Activated CD4-positive, alpha-beta memory T cell treated with anti-CD3 and anti-CD28 coated beads, Interleukin-2, amount 10 ng/mL, durations not matched to agents 7 days and 5 days (primary cell): ENCODE measurements at regions of chr12 and their contacts with region 1.

Region 1: GRCh38 chr12:131928711-131929580 is at the start of gene PUS1:
- DNase-seq: peak; percentile 95
- H3K4me3 Mint-ChIP-seq: peak within 1 kb of the TSS; percentile 99
- H3K27ac Mint-ChIP-seq: peak within 1 kb of the TSS; percentile 91
- H3K4me1 Mint-ChIP-seq: peaks cover 31% of the 10 kb centered on the region
- H3K27me3 Mint-ChIP-seq: no peaks in the 10 kb centered on the region
- total RNA-seq, gene PUS1: 32.9 to 34.7 TPM

Region 2: DNA sequence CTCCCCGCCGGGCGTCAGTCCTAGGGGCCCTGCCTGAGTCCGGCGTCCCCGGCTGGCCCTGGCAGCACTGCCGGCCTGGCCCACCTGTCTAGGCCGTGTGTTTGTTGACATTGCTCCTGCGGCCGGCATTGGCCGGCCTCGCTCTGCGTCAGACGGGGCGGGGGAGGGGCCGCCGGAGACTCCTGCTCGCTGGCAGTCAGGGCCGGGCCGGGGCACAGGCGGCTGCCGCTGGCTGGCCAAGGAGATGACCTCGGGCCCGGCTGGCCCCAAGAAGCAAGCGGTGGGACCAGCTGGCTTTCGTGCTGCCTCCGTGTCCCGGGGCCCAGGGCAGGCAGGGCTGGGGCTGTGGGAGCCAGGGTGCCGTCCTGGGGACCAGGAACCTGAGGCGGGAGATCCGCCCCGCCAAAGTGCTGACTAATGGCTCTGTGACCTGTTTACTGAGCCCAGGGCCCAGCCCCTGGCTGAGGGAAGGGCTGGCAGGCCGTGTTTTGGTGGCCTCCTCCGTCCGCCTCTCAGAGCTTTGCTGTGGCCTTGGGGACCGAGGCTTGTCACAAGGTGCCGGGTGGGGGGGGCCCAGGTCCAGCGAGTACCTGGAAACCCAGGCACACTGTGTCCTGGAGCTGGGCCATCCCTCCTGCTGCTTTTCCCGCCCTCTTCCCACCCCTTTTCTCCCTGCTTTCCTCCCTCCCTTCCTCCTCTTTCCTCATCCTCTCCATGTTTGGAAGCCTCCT is 32.7 kb before region 1 on chr12:
- CTCF ChIA-PET with region 1: no interaction called
- POLR2A ChIA-PET with region 1: interaction called, 31 read pairs
- DNase-seq: peak; percentile 77
- H3K4me3 Mint-ChIP-seq: peak overlapping the region; percentile 86
- H3K27ac Mint-ChIP-seq: no peak overlapping the region
- H3K4me1 Mint-ChIP-seq: peaks cover 26% of the 10 kb centered on the region
- H3K27me3 Mint-ChIP-seq: no peaks in the 10 kb centered on the region

Region 3: GRCh38 chr12:131949431-131950181 is 20.7 kb after region 1 on chr12 and contains the start of gene EP400:
- CTCF ChIA-PET with region 1: interaction called, 7 read pairs
- POLR2A ChIA-PET with region 1: interaction called, 34 read pairs
- DNase-seq: peak; percentile 94
- H3K4me3 Mint-ChIP-seq: peak within 1 kb of the TSS; percentile 91
- H3K27ac Mint-ChIP-seq: peak within 1 kb of the TSS; percentile 92
- H3K4me1 Mint-ChIP-seq: peaks cover 41% of the 10 kb centered on the region
- H3K27me3 Mint-ChIP-seq: no peaks in the 10 kb centered on the region
- total RNA-seq, gene EP400: 42.2 to 43.4 TPM